Left cardiac atrium (tissue), 4 donors: ENCODE measurements at regions of chr5 and their contacts with region 1.

Region 1: GRCh38 chr5:149656576-149657182 is 73.4 kb upstream of the PPARGC1B start:
- DNase-seq: no peak
- ATAC-seq: peak in 1 of 2 donors; percentile 46

Region 2: GRCh38 chr5:149559712-149560111 is 97.0 kb before region 1 on chr5:
- intact Hi-C with region 1: no loop called
- DNase-seq: no peak
- ATAC-seq: no peak

Region 3: DNA sequence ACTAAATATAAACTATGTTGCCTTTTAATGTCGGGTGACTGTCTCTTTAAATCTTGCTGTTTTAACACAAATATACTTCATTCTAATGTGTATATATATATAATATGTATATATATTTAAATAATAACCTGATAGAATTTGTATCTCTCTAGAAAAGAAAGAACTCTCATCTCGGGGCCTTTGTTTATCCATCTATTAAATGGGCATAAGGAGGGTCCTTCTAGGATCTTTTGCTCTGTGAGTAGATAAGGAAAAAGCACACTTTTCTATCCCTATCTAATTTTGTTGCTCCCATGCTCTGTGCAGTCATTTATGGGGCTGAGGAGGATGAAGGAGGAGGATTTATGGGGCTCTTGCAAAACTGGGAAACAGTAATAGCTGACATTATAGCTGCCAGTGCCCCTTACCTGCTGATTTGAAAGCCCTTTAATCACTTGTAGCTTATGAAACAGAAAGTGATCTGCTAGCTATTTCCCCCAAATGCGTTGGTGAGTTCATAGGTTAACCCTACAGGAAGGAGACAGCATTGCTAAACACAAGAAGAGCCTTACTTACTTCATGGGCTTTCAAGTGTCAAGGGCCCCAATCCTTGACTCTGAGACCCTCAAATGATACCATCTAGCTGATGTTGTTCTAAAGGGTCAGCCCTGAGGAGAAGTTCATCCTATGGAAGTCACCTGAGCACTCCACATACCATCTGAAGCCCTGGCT is 67.6 kb after region 1 on chr5:
- intact Hi-C with region 1: loop called in 1 of 2 experiments (anchors 10 kb)
- DNase-seq: no peak
- ATAC-seq: no peak

Region 4: DNA sequence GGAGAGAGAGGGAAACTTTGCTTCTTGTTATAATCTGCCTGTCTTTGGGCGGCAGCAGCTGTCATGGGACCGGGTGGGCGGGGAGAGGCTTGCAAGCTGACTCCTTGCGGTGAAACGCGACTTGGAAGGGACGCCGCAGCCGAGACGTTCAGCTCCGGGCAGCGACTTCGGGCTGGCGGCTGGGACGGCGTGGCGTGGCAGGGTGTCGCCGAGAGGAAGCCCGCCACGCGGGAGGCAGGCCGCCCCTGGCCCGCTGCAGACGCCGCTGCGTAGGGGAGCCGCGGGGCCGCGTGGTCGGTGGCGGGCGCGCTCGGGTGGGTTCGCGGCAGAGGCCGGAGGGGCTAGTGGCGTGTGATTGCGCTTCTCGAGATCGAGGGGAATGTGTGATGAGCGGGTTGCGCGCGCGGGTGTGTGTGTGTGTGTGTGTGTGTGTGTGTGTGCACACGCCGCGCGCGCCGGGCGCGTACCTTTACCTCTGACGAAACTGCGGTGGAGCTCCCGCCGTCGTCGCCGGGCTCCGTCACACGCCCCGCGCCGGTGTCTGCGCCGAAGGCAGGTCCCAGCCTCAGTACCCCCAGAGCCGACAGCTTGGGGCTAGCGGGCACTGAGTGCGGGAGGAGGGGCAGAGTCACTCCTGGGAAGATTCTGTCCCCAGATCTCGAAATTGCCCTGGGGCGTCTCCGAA is 75.1 kb after region 1 on chr5:
- intact Hi-C with region 1: loop called (anchors 5 to 10 kb)
- DNase-seq: peak; percentile 88
- ATAC-seq: peak; percentile 71 to 83

Region 5: GRCh38 chr5:149809931-149810617 is 153.4 kb after region 1 on chr5:
- intact Hi-C with region 1: loop called in 1 of 2 experiments (anchors 5 kb)
- DNase-seq: no peak
- ATAC-seq: no peak